GM12878 (cell line): ENCODE measurements at regions of chr14 and their contacts with region 1.

Region 1: GRCh38 chr14:22570132-22570949 is 18.7 kb downstream of the DAD1 start:
- DNase-seq: peak; percentile 99
- ATAC-seq: peak; percentile 72
- H3K4me3 ChIP-seq: peak overlapping the region; percentile 30
- H3K27ac ChIP-seq: peak overlapping the region; percentile 97
- H3K4me1 ChIP-seq: peaks cover 43% of the 10 kb centered on the region
- H3K27me3 ChIP-seq: no peaks in the 10 kb centered on the region
- CTCF ChIP-seq: peak; percentile 98 to 100 (median 100); a peak in 5 of 6 replicates
- EP300 ChIP-seq: no peak
- POLR2A ChIP-seq: no peak
- RAD21 ChIP-seq: peak; percentile 99

Region 2: GRCh38 chr14:22380571-22381407 is 189.6 kb before region 1 on chr14:
- CTCF ChIA-PET with region 1: interaction called, 60 read pairs
- POLR2A ChIA-PET with region 1: interaction called, 16 read pairs
- RAD21 ChIA-PET with region 1: interaction called, 156 read pairs
- SMC1A ChIA-PET with region 1: interaction called, 54 read pairs
- in situ Hi-C with region 1: no loop called
- intact Hi-C with region 1: no loop called
- DNase-seq: no peak
- ATAC-seq: no peak
- H3K4me3 ChIP-seq: no peak overlapping the region
- H3K27ac ChIP-seq: no peak overlapping the region
- H3K4me1 ChIP-seq: peaks cover 39% of the 10 kb centered on the region
- H3K27me3 ChIP-seq: no peaks in the 10 kb centered on the region
- CTCF ChIP-seq: no peak
- EP300 ChIP-seq: no peak
- POLR2A ChIP-seq: no peak
- RAD21 ChIP-seq: no peak

Region 3: GRCh38 chr14:22403281-22403680 is 167.1 kb before region 1 on chr14:
- CTCF ChIA-PET with region 1: no interaction called
- POLR2A ChIA-PET with region 1: no interaction called
- RAD21 ChIA-PET with region 1: no interaction called
- SMC1A ChIA-PET with region 1: no interaction called
- in situ Hi-C with region 1: no loop called
- intact Hi-C with region 1: no loop called
- DNase-seq: no peak
- ATAC-seq: no peak
- H3K4me3 ChIP-seq: no peak overlapping the region
- H3K27ac ChIP-seq: no peak overlapping the region
- H3K4me1 ChIP-seq: no peaks in the 10 kb centered on the region
- H3K27me3 ChIP-seq: peaks cover 0 to 3% of the 10 kb centered on the region in 2 experiments; a peak in 2 of 4 replicates
- CTCF ChIP-seq: no peak
- EP300 ChIP-seq: no peak
- POLR2A ChIP-seq: no peak
- RAD21 ChIP-seq: no peak

Region 4: GRCh38 chr14:22491683-22492621 is 78.4 kb before region 1 on chr14:
- CTCF ChIA-PET with region 1: interaction called, 18 read pairs
- POLR2A ChIA-PET with region 1: interaction called, 5 read pairs
- RAD21 ChIA-PET with region 1: interaction called, 27 read pairs
- SMC1A ChIA-PET with region 1: interaction called, 64 read pairs
- in situ Hi-C with region 1: no loop called
- intact Hi-C with region 1: no loop called
- DNase-seq: no peak
- ATAC-seq: peak; percentile 57
- H3K4me3 ChIP-seq: peak overlapping the region; percentile 45
- H3K27ac ChIP-seq: peak overlapping the region; percentile 98
- H3K4me1 ChIP-seq: peaks cover 86% of the 10 kb centered on the region
- H3K27me3 ChIP-seq: no peaks in the 10 kb centered on the region
- CTCF ChIP-seq: no peak
- EP300 ChIP-seq: peak; percentile 69 to 92; a peak in 3 of 4 replicates
- POLR2A ChIP-seq: peak; percentile 68
- RAD21 ChIP-seq: peak; percentile 26; the same call in 1 of the 2 replicates

Region 5: GRCh38 chr14:22556990-22557623 is 13.2 kb before region 1 on chr14:
- CTCF ChIA-PET with region 1: interaction called, 189 read pairs
- POLR2A ChIA-PET with region 1: interaction called, 74 read pairs
- RAD21 ChIA-PET with region 1: interaction called, 190 read pairs
- SMC1A ChIA-PET with region 1: interaction called, 134 read pairs
- in situ Hi-C with region 1: no loop called
- intact Hi-C with region 1: loop called (anchors 1 kb)
- DNase-seq: no peak
- ATAC-seq: peak; percentile 58
- H3K4me3 ChIP-seq: peak overlapping the region; percentile 51; the same call in 1 of the 2 replicates
- H3K27ac ChIP-seq: peak overlapping the region; percentile 100
- H3K4me1 ChIP-seq: peaks cover 73% of the 10 kb centered on the region
- H3K27me3 ChIP-seq: no peaks in the 10 kb centered on the region
- CTCF ChIP-seq: peak; percentile 66 to 93 (median 86)
- EP300 ChIP-seq: no peak
- POLR2A ChIP-seq: peak; percentile 5; the same call in 1 of the 2 replicates
- RAD21 ChIP-seq: peak; percentile 74

Region 6: DNA sequence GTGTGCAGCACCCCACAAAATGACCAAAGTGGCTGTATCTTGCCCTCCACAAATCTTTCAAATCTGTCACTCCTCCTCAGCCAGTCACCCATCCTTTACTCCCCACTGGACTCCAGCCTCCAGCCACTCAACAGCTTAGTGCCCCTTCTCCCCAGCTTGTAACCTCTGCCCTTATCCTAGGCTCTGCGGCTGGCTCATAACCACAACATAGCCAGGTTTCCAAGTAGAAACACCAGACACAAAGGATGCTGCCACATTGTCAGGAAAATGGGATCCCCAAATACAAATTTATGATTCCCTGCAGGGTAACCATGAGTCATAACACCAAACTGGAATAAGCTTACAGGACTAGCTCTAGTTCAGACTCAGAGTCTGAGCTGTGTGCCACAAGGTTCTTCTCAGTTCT is 211.2 kb after region 1 on chr14:
- CTCF ChIA-PET with region 1: interaction called, 11 read pairs
- POLR2A ChIA-PET with region 1: no interaction called
- RAD21 ChIA-PET with region 1: interaction called, 4 read pairs
- SMC1A ChIA-PET with region 1: interaction called, 5 read pairs
- in situ Hi-C with region 1: loop called (anchors 5 kb)
- intact Hi-C with region 1: no loop called
- DNase-seq: no peak
- ATAC-seq: no peak
- H3K4me3 ChIP-seq: no peak overlapping the region
- H3K27ac ChIP-seq: no peak overlapping the region
- H3K4me1 ChIP-seq: peaks cover 13% of the 10 kb centered on the region
- H3K27me3 ChIP-seq: no peaks in the 10 kb centered on the region
- CTCF ChIP-seq: no peak
- EP300 ChIP-seq: no peak
- POLR2A ChIP-seq: no peak
- RAD21 ChIP-seq: no peak

Region 7: DNA sequence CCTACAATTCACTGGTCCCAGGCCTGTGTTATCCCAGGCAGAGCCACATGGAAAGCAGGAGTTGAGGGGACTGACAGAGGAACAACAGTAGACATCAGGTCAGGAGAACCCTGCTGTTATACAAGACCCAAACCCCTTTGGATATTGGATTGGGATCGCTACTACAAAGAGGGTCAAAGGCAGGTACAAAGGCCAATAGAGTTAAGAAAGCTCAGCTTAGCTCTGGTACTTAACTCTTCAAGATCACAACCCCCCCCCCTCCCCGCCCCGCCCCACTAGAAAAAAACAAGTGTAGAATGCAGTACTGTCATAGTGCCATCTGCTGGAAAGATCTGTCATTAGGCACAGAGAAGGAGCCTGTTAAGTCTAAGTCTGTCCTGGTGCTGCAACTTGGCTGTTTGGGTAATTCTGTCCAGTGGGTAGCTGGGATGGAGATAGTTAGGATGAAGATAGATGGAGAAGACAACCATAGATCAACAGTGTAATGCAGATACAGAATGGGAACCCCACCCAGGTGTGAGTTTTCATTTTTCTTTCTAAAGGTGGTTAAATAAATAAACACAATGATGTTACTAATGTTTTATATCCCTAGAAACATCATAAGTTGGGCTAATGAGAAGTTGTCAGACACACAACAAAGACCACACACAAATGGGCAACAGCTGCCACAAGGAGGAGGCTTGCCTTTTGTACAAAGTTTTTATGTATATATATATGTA is 329.9 kb after region 1 on chr14:
- CTCF ChIA-PET with region 1: interaction called, 15 read pairs
- POLR2A ChIA-PET with region 1: interaction called, 4 read pairs
- RAD21 ChIA-PET with region 1: interaction called, 9 read pairs
- SMC1A ChIA-PET with region 1: interaction called, 4 read pairs
- in situ Hi-C with region 1: loop called (anchors 5 kb)
- intact Hi-C with region 1: loop called (anchors 2 kb)
- DNase-seq: peak; percentile 47
- ATAC-seq: peak; percentile 95
- H3K4me3 ChIP-seq: no peak overlapping the region
- H3K27ac ChIP-seq: no peak overlapping the region
- H3K4me1 ChIP-seq: no peaks in the 10 kb centered on the region
- H3K27me3 ChIP-seq: no peaks in the 10 kb centered on the region
- CTCF ChIP-seq: peak; percentile 65 to 76 (median 69)
- EP300 ChIP-seq: no peak
- POLR2A ChIP-seq: no peak
- RAD21 ChIP-seq: peak; percentile 89